ENCODE measurements at regions of chr5 and their contacts with region 1.

Region 1: DNA sequence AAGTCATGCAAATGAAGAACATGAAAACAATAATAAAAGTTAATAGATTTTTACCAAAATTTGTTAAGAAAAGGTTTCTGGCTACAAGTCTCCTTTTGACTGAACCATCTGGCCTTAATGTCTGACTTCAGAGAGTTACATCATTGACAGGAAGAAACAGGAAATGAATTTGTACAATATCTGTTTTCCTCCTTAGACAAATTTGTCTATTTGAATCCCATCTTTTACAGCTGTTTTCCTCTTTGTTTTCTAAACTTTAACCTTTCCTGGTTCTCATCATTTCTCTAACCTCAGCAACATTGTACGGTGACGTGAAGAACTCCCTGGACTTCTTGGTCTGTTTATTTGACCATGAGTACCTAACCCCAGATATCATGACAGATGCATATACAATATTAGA is 567.5 kb upstream of the RIOK2 start:
- DNase-seq: no peak
- ATAC-seq: no peak
- H3K4me3 ChIP-seq: no peak overlapping the region
- H3K27ac ChIP-seq: no peak overlapping the region
- H3K4me1 ChIP-seq: no peaks in the 10 kb centered on the region
- H3K27me3 ChIP-seq: no peaks in the 10 kb centered on the region
- CTCF ChIP-seq: no peak
- POLR2A ChIP-seq: no peak
- RAD21 ChIP-seq: no peak

Region 2: GRCh38 chr5:97735209-97735608 is 15.4 kb before region 1 on chr5:
- CTCF ChIA-PET with region 1: no interaction called
- POLR2A ChIA-PET with region 1: no interaction called
- RAD21 ChIA-PET with region 1: no interaction called
- intact Hi-C with region 1: loop called (anchors 1 kb)
- DNase-seq: no peak
- ATAC-seq: no peak
- H3K4me3 ChIP-seq: no peak overlapping the region
- H3K27ac ChIP-seq: no peak overlapping the region
- H3K4me1 ChIP-seq: no peaks in the 10 kb centered on the region
- H3K27me3 ChIP-seq: no peaks in the 10 kb centered on the region
- CTCF ChIP-seq: no peak
- POLR2A ChIP-seq: no peak
- RAD21 ChIP-seq: no peak

Region 3: DNA sequence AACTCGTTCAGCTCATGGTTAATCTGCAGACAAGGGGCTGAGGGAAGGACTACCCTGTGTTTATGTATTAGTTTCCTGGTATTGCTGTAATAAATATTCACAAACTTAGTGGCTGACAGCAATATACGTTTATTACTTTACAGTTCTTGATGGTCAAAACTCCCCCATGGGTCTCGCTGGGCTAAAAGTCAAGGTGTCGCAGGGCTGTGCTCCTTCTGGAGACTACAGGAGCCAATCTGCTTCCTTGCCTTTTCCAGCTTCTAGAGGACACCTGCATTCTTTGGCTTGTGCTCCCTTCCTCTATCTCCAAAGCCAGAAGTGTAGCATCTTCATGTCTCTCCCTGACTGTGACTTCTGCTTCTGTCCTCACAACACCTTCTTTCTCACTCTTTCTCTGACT is 86.2 kb after region 1 on chr5:
- CTCF ChIA-PET with region 1: no interaction called
- POLR2A ChIA-PET with region 1: no interaction called
- RAD21 ChIA-PET with region 1: no interaction called
- intact Hi-C with region 1: no loop called
- DNase-seq: no peak
- ATAC-seq: no peak
- H3K4me3 ChIP-seq: no peak overlapping the region
- H3K27ac ChIP-seq: no peak overlapping the region
- H3K4me1 ChIP-seq: peaks cover 15 to 18% of the 10 kb centered on the region in 2 experiments
- H3K27me3 ChIP-seq: no peaks in the 10 kb centered on the region
- CTCF ChIP-seq: no peak
- POLR2A ChIP-seq: no peak
- RAD21 ChIP-seq: no peak

Region 4: DNA sequence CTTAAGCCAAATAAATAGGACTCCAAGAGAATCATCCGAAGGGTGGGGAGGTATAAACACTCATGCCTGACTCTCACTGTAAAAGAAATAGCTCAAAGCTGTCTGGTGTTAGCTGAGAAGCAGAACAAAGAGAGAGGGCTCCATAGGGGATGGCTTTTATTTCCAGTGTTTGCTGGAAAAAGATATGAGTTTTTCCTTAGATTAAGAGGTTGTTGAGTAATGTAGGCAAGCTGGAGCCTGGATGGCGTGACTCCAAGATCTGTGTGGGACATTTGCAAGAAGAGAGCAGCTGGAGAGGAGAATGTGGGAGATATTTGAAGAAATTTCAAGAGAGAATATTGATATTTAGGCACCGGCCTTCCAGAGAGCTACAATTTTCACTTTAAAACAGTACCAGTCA is 229.2 kb after region 1 on chr5:
- CTCF ChIA-PET with region 1: no interaction called
- POLR2A ChIA-PET with region 1: no interaction called
- RAD21 ChIA-PET with region 1: no interaction called
- intact Hi-C with region 1: no loop called
- DNase-seq: no peak
- ATAC-seq: no peak
- H3K4me3 ChIP-seq: no peak overlapping the region
- H3K27ac ChIP-seq: no peak overlapping the region
- H3K4me1 ChIP-seq: no peaks in the 10 kb centered on the region
- H3K27me3 ChIP-seq: no peaks in the 10 kb centered on the region
- CTCF ChIP-seq: no peak
- POLR2A ChIP-seq: no peak
- RAD21 ChIP-seq: no peak

Measured in HCT116 (cell line).